ENCODE measurements at regions of chr13 and their contacts with region 1.

Region 1: DNA sequence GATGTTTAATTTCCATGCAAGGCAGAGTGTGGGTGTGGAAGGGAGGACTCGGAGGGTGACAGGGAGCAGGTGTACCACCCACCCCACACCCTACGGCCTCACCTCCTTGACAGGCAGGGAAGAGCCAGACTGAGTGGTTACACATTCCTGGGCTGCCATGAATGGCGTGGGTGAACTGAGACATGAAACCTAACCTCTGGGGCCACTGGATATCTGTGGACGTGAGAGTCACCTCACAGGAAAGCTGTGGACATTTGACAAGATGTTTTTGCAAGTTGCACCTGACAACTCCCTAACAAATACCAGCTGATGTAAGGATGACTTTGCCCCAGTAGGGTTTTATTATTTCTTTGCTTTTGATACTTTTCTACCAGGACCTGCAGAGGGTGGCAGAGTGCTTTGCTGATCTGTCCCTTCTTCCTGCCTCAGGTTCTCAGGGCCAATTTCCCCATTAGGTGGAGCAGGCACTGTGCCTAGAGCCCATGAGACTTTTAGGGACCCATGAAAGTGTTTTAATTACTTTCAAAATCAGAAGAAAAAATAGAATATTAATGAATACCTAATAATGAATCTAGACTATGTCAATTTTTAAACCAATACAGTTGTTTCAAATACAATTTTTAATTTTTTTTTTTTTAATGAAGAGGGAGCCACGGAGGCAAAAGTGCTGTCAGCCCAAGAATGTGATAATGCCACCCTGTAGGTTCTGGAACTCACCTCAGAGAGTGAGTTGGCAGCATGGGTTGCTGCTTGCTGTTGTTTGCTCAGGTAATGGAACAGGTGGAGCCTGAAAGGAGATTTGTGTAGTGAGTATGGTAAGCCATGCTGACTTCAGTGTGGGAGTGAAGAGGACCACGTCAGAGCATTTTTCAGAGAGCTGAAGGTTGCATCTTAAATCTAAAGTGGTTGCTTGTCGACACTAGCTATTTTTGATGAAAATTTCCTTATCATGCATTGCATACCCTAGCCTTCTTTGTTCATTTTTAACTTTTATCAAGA is 58.0 kb upstream of the CYSLTR2 start:
- DNase-seq: peak; percentile 91
- H3K4me3 ChIP-seq: no peak overlapping the region
- H3K27ac ChIP-seq: no peak overlapping the region
- H3K4me1 ChIP-seq: peaks cover 6% of the 10 kb centered on the region
- H3K27me3 ChIP-seq: peaks cover 4 to 7% of the 10 kb centered on the region in 2 experiments
- CTCF ChIP-seq: peak; percentile 49 to 66
- POLR2A ChIP-seq: no peak

Region 2: DNA sequence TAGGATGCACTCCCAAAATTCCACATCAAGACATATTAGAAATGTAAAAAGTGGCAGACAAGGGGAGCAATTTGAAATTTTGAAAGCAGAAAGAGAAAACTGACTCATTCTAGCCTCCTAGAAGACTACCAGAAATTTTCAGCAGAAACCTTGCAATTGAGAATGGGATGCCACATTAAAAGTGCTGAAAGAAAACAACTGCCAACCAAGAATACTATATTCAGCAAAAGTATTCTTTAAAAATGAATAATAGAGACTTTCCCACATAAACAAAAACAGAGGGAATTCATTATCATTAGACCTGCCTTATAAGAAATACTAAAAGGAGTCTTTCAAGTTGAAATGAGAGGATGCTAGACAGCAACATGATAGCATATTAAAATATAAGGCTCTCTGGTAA is 1620.6 kb before region 1 on chr13:
- CTCF ChIA-PET with region 1: no interaction called
- POLR2A ChIA-PET with region 1: no interaction called
- dilution Hi-C with region 1: no loop called
- intact Hi-C with region 1: loop called (anchors 10 kb)
- DNase-seq: no peak
- H3K4me3 ChIP-seq: no peak overlapping the region
- H3K27ac ChIP-seq: no peak overlapping the region
- H3K4me1 ChIP-seq: no peaks in the 10 kb centered on the region
- H3K27me3 ChIP-seq: no peaks in the 10 kb centered on the region
- CTCF ChIP-seq: no peak
- POLR2A ChIP-seq: no peak

Region 3: GRCh38 chr13:48612896-48613295 is 17.2 kb after region 1 on chr13:
- CTCF ChIA-PET with region 1: no interaction called
- POLR2A ChIA-PET with region 1: no interaction called
- dilution Hi-C with region 1: no loop called
- intact Hi-C with region 1: no loop called
- DNase-seq: no peak
- H3K4me3 ChIP-seq: no peak overlapping the region
- H3K27ac ChIP-seq: no peak overlapping the region
- H3K4me1 ChIP-seq: no peaks in the 10 kb centered on the region
- H3K27me3 ChIP-seq: peaks cover 0 to 4% of the 10 kb centered on the region in 2 experiments
- CTCF ChIP-seq: no peak
- POLR2A ChIP-seq: no peak

Region 4: GRCh38 chr13:48731957-48732569 is 136.3 kb after region 1 on chr13:
- CTCF ChIA-PET with region 1: interaction called, 9 read pairs
- POLR2A ChIA-PET with region 1: no interaction called
- dilution Hi-C with region 1: no loop called
- intact Hi-C with region 1: loop called (anchors 1 kb)
- DNase-seq: peak; percentile 59
- H3K4me3 ChIP-seq: no peak overlapping the region
- H3K27ac ChIP-seq: no peak overlapping the region
- H3K4me1 ChIP-seq: no peaks in the 10 kb centered on the region
- H3K27me3 ChIP-seq: peaks cover 9% of the 10 kb centered on the region in 2 experiments
- CTCF ChIP-seq: peak; percentile 76 to 91
- POLR2A ChIP-seq: no peak

Region 5: GRCh38 chr13:48749699-48750473 is 154.2 kb after region 1 on chr13:
- CTCF ChIA-PET with region 1: no interaction called
- POLR2A ChIA-PET with region 1: no interaction called
- dilution Hi-C with region 1: no loop called
- intact Hi-C with region 1: loop called (anchors 1 kb)
- DNase-seq: peak; percentile 86
- H3K4me3 ChIP-seq: no peak overlapping the region
- H3K27ac ChIP-seq: no peak overlapping the region
- H3K4me1 ChIP-seq: peaks cover 6% of the 10 kb centered on the region
- H3K27me3 ChIP-seq: peaks cover 0 to 3% of the 10 kb centered on the region in 2 experiments
- CTCF ChIP-seq: peak; percentile 53 to 56
- POLR2A ChIP-seq: no peak